Panc1 (cell line): ENCODE measurements at regions of chr12 and their contacts with region 1.

Region 1: GRCh38 chr12:32435921-32436705 is 36.8 kb downstream of the FGD4 start:
- DNase-seq: no peak
- ATAC-seq: peak; percentile 63
- H3K4me3 ChIP-seq: no peak overlapping the region
- H3K27ac ChIP-seq: peak overlapping the region; percentile 11; the same call in 1 of the 2 replicates
- H3K4me1 ChIP-seq: peaks cover 14% of the 10 kb centered on the region
- H3K27me3 ChIP-seq: no peaks in the 10 kb centered on the region
- CTCF ChIP-seq: no peak

Region 2: GRCh38 chr12:32290411-32290810 is 145.7 kb before region 1 on chr12:
- CTCF ChIA-PET with region 1: no interaction called
- POLR2A ChIA-PET with region 1: no interaction called
- in situ Hi-C with region 1: no loop called
- intact Hi-C with region 1: no loop called
- DNase-seq: no peak
- ATAC-seq: no peak
- H3K4me3 ChIP-seq: no peak overlapping the region
- H3K27ac ChIP-seq: no peak overlapping the region
- H3K4me1 ChIP-seq: no peaks in the 10 kb centered on the region
- H3K27me3 ChIP-seq: no peaks in the 10 kb centered on the region
- CTCF ChIP-seq: no peak

Region 3: GRCh38 chr12:32494656-32495055 is 58.5 kb after region 1 on chr12:
- CTCF ChIA-PET with region 1: no interaction called
- POLR2A ChIA-PET with region 1: interaction called, 10 read pairs
- in situ Hi-C with region 1: no loop called
- intact Hi-C with region 1: no loop called
- DNase-seq: no peak
- ATAC-seq: no peak
- H3K4me3 ChIP-seq: no peak overlapping the region
- H3K27ac ChIP-seq: no peak overlapping the region
- H3K4me1 ChIP-seq: no peaks in the 10 kb centered on the region
- H3K27me3 ChIP-seq: no peaks in the 10 kb centered on the region
- CTCF ChIP-seq: no peak